B cell (primary cell): ENCODE measurements at regions of chr2 and their contacts with region 1.

Region 1: DNA sequence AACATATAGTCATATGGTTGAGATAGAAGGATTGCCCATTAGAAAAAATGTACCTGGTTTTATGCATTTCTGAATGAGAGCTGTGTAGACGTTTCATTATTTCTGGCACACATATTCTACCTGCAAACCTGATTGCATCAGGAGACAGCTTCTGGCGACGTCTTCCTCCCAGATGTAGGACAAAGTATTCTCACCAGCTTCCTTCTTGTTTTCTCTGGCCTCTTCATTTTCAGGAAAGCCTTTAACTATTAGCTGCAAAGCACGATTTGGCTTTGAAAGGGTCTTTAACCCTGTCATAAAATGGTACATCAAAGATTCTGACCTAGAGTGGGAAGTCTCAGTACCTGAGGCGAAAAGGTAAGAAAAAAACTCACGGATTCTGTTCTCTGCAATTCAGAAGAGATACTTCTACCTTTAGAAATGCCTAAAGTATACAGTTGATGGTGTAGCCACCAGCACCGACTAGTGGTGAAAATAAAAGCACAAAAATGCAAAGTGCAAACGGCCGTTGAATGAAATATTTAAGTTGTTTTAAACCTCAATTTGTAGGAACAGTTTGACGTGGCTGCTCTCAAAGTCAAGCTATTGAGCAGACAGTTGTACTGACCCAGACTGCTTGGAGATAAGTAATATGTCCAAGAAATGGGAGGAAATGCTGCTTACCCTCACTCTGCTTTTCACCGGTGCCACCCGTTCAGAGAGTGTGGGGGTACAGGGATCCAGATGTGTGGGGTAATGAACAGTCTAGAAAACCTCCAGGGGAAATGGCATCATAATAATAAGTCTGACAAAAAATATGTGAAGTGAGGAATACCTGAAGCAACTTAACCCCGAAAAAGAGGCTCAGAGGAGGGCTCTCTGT is 20.2 kb downstream of the IL18RAP start:
- DNase-seq: peak; percentile 65
- ATAC-seq: no peak
- H3K4me3 ChIP-seq: no peak overlapping the region
- H3K4me3 Mint-ChIP-seq: no peak overlapping the region
- H3K27ac ChIP-seq: no peak overlapping the region
- H3K27ac Mint-ChIP-seq: no peak overlapping the region
- H3K4me1 ChIP-seq: peaks cover 0 to 5% of the 10 kb centered on the region in 2 donors
- H3K4me1 Mint-ChIP-seq: peaks cover 3% of the 10 kb centered on the region
- H3K27me3 ChIP-seq: no peaks in the 10 kb centered on the region
- H3K27me3 Mint-ChIP-seq: no peaks in the 10 kb centered on the region
- CTCF ChIP-seq: peak; percentile 82

Region 2: DNA sequence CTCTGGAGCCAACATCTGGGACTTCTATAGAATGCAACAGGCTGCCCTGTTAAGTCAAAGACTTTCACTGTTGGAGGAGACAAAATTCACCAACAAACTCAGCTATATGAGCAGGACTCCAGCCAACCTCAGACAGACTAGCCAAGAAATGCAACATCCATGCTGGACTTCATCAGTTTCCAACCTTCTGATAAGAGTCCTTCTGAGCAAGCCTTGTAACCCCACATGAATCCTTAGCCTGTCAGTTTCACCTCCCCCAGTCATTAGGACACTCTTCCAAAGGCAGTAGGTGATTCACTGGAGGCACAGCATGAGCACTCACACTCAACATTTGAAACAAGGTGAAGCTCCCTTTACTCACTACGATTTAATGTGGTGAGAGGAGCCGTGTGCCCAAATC is 1297.8 kb before region 1 on chr2:
- CTCF ChIA-PET with region 1: no interaction called
- POLR2A ChIA-PET with region 1: no interaction called
- intact Hi-C with region 1: no loop called
- DNase-seq: no peak
- ATAC-seq: no peak
- H3K4me3 ChIP-seq: no peak overlapping the region
- H3K4me3 Mint-ChIP-seq: no peak overlapping the region
- H3K27ac ChIP-seq: no peak overlapping the region
- H3K27ac Mint-ChIP-seq: no peak overlapping the region
- H3K4me1 ChIP-seq: peaks cover 10 to 12% of the 10 kb centered on the region in 2 donors
- H3K4me1 Mint-ChIP-seq: peaks cover 11% of the 10 kb centered on the region
- H3K27me3 ChIP-seq: peaks cover 0 to 43% (median 20%) of the 10 kb centered on the region in 4 experiments
- H3K27me3 Mint-ChIP-seq: peaks cover 67% of the 10 kb centered on the region
- CTCF ChIP-seq: no peak

Region 3: DNA sequence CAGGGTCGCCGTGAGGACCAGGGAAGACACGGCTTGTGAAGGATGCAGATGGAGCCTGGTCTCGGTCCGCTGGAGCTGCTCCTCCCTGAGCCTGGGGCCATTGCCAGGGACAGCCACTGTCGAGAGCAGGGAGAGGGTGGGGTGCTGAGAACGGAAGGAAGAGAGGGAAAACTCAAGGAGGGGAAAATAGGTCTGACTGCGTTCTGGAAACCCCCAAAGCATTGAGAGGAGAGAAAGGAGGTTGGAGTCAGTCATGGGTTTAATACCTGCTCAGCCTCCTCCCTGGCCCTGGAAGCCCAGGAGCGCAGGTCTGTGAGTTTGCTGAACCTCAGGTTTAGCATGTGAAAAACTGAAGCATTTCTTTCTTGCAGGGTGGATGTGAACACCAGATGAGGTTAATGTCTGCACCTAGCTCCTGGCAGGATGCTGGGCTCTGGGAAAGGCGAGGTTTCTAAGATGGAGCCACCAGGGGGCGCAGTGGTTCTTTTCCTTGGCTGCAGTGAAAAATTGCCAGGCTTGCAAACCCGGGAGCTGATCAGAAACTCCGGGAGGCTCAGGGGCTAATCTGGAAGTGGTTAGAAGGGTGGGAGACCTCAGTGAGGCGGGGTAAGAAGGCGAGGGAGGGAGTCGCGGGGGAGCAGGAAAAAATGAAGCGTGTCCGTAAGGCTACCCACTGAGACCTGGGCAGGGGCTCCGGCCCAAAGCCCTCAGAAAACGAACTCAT is 1101.1 kb before region 1 on chr2:
- CTCF ChIA-PET with region 1: interaction called, 4 read pairs
- POLR2A ChIA-PET with region 1: no interaction called
- intact Hi-C with region 1: loop called (anchors 10 kb)
- DNase-seq: peak; percentile 73
- ATAC-seq: peak; percentile 56
- H3K4me3 ChIP-seq: no peak overlapping the region
- H3K4me3 Mint-ChIP-seq: no peak overlapping the region
- H3K27ac ChIP-seq: no peak overlapping the region
- H3K27ac Mint-ChIP-seq: no peak overlapping the region
- H3K4me1 ChIP-seq: peaks cover 0 to 8% of the 10 kb centered on the region in 2 donors
- H3K4me1 Mint-ChIP-seq: peaks cover 7% of the 10 kb centered on the region
- H3K27me3 ChIP-seq: no peaks in the 10 kb centered on the region
- H3K27me3 Mint-ChIP-seq: peaks cover 2% of the 10 kb centered on the region
- CTCF ChIP-seq: peak; percentile 90

Region 4: DNA sequence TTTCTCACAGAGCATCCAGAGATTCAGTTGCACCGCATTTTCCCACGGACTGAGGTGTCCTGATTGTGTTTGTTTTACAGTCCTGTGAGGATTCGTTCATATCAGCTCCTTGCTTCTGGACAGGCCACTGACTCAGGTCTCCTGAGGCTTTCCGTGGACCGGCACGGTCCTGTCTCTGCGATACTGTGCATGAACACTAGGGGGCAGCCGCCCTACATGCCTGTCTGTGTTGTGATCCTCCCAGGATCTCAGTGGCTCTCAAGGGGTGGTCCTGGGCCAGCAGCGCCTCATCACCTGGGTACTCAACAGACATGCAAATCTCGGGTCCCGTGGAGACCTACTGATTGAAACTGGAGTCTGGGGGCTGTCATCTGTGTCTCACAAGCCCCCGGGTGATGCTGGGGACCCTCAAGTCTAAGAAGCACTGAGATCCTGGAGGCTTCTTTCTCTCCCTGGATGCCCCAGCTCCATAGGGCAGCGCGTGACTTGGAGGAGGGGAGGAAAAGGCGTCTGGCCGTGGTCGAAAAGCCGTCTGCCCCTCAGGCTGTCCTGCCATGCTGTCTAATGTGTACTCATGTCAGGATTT is 422.5 kb before region 1 on chr2:
- CTCF ChIA-PET with region 1: interaction called, 18 read pairs
- POLR2A ChIA-PET with region 1: no interaction called
- intact Hi-C with region 1: loop called (anchors 1 kb)
- DNase-seq: peak; percentile 80
- ATAC-seq: peak; percentile 97
- H3K4me3 ChIP-seq: no peak overlapping the region
- H3K4me3 Mint-ChIP-seq: no peak overlapping the region
- H3K27ac ChIP-seq: no peak overlapping the region
- H3K27ac Mint-ChIP-seq: no peak overlapping the region
- H3K4me1 ChIP-seq: peaks cover 0 to 3% of the 10 kb centered on the region in 2 donors
- H3K4me1 Mint-ChIP-seq: peaks cover 4% of the 10 kb centered on the region
- H3K27me3 ChIP-seq: peaks cover 0 to 8% (median 0%) of the 10 kb centered on the region in 4 experiments
- H3K27me3 Mint-ChIP-seq: peaks cover 5% of the 10 kb centered on the region
- CTCF ChIP-seq: peak; percentile 99

Region 5: DNA sequence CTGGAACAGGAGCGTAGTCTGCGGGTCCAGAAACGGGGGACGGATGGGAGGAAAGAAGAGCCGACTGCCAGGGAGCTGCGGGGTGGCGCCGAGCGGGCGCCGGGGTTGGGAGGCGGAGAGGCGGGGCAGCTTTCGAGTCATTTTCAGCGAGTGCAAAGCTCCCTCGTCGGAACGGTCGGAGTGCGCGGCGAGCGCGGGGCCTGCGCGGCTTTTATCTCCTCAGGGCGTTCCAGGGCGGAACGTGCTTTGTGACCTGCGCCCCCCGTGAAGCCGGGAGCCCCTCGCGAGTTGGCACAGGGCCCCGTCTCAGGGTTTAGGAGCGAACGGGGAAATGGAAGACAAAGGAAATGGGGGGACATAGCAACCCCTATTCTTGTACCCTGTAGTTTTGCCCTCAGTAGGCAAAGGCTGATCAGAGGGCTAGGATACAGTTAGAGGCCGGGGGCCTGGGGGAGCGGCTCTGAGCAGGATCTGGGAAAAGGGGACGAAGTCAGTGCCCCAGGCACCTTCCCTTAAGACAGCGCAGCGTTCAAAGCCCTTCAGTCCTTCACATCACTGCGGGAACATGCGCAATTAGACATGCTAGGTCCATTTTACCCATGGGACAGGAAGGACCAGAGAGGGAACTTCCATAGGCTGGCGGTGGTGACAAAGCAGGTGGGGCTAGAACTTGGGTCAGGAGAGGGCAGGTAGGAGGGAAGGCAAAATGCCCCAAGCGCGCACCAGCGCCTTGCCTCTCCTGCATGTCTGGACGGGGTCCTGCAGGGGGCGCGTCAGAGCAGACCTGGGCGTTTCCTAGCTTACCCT is 192.0 kb before region 1 on chr2:
- CTCF ChIA-PET with region 1: interaction called, 18 read pairs
- POLR2A ChIA-PET with region 1: no interaction called
- intact Hi-C with region 1: loop called (anchors 1 kb)
- DNase-seq: peak; percentile 65
- ATAC-seq: peak; percentile 57
- H3K4me3 ChIP-seq: peak overlapping the region in 4 of 5 experiments; percentile 17 to 49 (median 40)
- H3K4me3 Mint-ChIP-seq: peak overlapping the region; percentile 77
- H3K27ac ChIP-seq: no peak overlapping the region
- H3K27ac Mint-ChIP-seq: no peak overlapping the region
- H3K4me1 ChIP-seq: peaks cover 8 to 12% of the 10 kb centered on the region in 2 donors
- H3K4me1 Mint-ChIP-seq: peaks cover 9% of the 10 kb centered on the region
- H3K27me3 ChIP-seq: peaks cover 0 to 28% (median 7%) of the 10 kb centered on the region in 4 experiments
- H3K27me3 Mint-ChIP-seq: peaks cover 35% of the 10 kb centered on the region
- CTCF ChIP-seq: peak; percentile 70

Region 6: GRCh38 chr2:102355526-102356380 is 87.4 kb before region 1 on chr2 and contains the start of gene IL18R1:
- CTCF ChIA-PET with region 1: interaction called, 9 read pairs
- POLR2A ChIA-PET with region 1: no interaction called
- intact Hi-C with region 1: loop called (anchors 5 kb)
- DNase-seq: peak; percentile 81
- ATAC-seq: peak; percentile 88
- H3K4me3 ChIP-seq: peak within 1 kb of the TSS; percentile 56 to 91 (median 77)
- H3K4me3 Mint-ChIP-seq: peak within 1 kb of the TSS; percentile 82
- H3K27ac ChIP-seq: peak within 1 kb of the TSS; percentile 64 to 80
- H3K27ac Mint-ChIP-seq: peak within 1 kb of the TSS; percentile 82
- H3K4me1 ChIP-seq: peaks cover 9 to 23% of the 10 kb centered on the region in 2 donors
- H3K4me1 Mint-ChIP-seq: peaks cover 23% of the 10 kb centered on the region
- H3K27me3 ChIP-seq: no peaks in the 10 kb centered on the region
- H3K27me3 Mint-ChIP-seq: no peaks in the 10 kb centered on the region
- CTCF ChIP-seq: peak; percentile 78
- total RNA-seq, gene IL18R1: 1.1 and 2.4 TPM in 2 replicates

Region 7: DNA sequence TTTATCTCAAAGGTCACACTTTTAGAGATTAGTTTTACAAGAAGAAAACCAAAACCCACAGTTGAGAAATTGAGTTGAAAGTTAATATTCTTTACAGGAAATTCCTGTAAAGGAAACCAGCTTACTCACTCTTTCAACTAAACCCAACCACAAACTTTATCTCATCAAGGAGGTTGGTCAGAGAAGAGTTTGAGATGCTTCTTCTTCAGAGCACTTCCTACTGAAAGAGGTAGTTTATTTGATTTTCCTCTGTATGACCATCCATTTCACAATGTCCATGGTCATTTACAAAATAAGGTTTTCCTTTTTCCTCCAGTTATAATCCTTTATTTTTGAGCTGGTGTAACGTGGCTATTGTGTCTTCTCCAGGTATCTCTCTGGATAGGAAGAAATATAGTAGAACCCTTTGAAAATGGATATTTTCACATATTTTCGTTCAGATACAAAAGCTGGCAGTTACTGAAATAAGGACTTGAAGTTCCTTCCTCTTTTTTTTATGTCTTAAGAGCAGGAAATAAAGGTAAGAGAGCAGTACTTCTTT is 24.7 kb before region 1 on chr2:
- CTCF ChIA-PET with region 1: interaction called, 12 read pairs
- POLR2A ChIA-PET with region 1: no interaction called
- intact Hi-C with region 1: no loop called
- DNase-seq: peak; percentile 51
- ATAC-seq: peak; percentile 43
- H3K4me3 ChIP-seq: peak overlapping the region in 2 of 5 experiments; percentile 2 to 30
- H3K4me3 Mint-ChIP-seq: peak overlapping the region; percentile 44
- H3K27ac ChIP-seq: peak overlapping the region; percentile 19 to 74
- H3K27ac Mint-ChIP-seq: peak overlapping the region; percentile 51
- H3K4me1 ChIP-seq: peaks cover 26 to 27% of the 10 kb centered on the region in 2 donors
- H3K4me1 Mint-ChIP-seq: peaks cover 23% of the 10 kb centered on the region
- H3K27me3 ChIP-seq: no peaks in the 10 kb centered on the region
- H3K27me3 Mint-ChIP-seq: no peaks in the 10 kb centered on the region
- CTCF ChIP-seq: no peak